ENCODE measurements at regions of chr20 and their contacts with region 1.

Region 1: DNA sequence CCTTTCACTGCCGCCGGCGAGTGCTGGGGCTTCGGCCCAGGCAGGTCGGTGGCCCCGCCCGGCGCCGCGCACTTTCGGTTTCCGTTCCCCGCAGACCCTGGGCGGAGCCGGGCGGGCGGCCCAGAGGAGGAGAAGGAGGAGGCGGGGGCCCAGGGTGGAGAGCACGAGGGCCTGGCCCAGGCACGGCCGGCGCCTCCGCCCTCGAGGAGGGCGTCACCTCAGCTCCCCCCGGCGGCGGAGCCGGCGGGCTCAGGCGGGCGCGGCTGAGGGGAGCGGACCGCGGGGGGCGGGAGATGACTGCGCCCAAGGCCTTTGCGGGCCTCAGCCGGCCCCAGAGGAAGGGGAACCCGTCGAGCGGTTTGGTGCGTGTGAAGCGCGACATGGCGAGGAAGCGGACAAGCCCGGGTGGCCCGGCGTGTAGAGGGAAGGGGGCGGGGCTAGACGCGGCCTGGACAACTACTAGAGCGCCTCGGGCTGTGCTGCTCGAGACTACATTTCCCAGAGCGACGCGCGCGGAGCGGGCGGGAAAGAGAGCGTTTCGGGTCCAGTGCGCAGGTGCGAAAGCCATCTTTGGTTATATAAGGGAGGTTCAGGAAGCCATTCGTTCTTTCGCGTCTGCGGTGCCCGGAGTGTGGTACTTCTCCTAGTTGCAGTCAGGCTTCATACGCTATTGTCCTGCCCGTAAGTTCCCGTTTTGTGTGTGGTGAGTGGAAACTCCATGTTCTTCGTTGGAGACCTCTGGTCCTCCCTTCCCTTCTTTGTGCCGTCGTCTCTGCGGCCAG is at the start of gene ZNFX1:
- DNase-seq: peak; percentile 100
- ATAC-seq: peak; percentile 82
- H3K4me3 ChIP-seq: peak within 1 kb of the TSS; percentile 78 to 100 (median 96)
- H3K4me3 Mint-ChIP-seq: peak within 1 kb of the TSS; percentile 99
- H3K27ac ChIP-seq: peak within 1 kb of the TSS; percentile 89 to 98
- H3K27ac Mint-ChIP-seq: peak within 1 kb of the TSS; percentile 98
- H3K4me1 ChIP-seq: peaks cover 50 to 64% of the 10 kb centered on the region in 2 donors
- H3K4me1 Mint-ChIP-seq: peaks cover 62% of the 10 kb centered on the region
- H3K27me3 ChIP-seq: no peaks in the 10 kb centered on the region
- H3K27me3 Mint-ChIP-seq: no peaks in the 10 kb centered on the region
- CTCF ChIP-seq: no peak
- total RNA-seq, gene ZNFX1: 37.9 and 38.8 TPM in 2 replicates

Region 2: DNA sequence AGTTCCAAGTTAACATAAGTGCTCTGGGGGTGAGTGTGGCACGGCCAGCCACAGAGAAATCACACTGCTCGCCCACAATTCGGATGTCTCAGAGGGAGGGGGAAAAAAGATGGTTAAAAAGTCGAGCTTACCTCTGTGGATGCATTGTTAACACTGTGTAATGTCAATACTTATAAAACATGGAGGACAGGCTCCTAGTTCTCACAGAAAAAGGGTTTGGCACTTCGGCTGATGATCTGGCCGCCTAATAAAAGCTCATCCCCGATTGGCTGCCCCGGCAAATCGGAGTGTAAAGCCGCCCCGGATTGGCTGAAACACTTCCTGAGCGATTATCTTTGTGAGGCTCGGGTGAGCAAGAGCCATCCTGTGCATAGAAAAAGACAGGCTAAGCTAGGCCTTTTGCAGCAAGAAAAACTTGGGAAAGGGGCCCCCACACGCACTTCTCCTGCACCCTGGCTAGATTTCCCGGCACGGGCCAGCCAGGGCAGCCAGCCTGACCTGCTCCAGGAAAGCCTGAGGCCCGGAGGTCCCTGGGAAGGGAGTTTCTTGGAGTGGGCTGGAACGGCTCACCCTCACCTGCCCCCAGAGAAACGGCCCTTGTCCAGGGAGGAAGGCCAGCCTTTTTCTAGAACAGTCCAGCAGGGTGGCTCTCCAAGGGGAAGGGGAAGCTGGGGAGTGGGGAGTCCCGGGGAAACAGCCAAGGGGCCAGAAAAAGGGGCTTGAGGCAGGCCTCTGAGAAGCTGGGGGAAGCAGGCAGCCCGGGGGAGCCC is 1921.5 kb before region 1 on chr20 and contains the start of gene ZMYND8:
- CTCF ChIA-PET with region 1: no interaction called
- POLR2A ChIA-PET with region 1: no interaction called
- intact Hi-C with region 1: loop called (anchors 5 kb)
- DNase-seq: peak; percentile 98
- ATAC-seq: peak; percentile 81
- H3K4me3 ChIP-seq: peak within 1 kb of the TSS; percentile 42 to 68 (median 56)
- H3K4me3 Mint-ChIP-seq: peak within 1 kb of the TSS; percentile 92
- H3K27ac ChIP-seq: peak within 1 kb of the TSS; percentile 90
- H3K27ac Mint-ChIP-seq: peak within 1 kb of the TSS; percentile 99
- H3K4me1 ChIP-seq: peaks cover 89 to 97% of the 10 kb centered on the region in 2 donors
- H3K4me1 Mint-ChIP-seq: peaks cover 57% of the 10 kb centered on the region
- H3K27me3 ChIP-seq: no peaks in the 10 kb centered on the region
- H3K27me3 Mint-ChIP-seq: no peaks in the 10 kb centered on the region
- CTCF ChIP-seq: no peak
- total RNA-seq, gene ZMYND8: 67.2 and 71.6 TPM in 2 replicates

Region 3: GRCh38 chr20:48921151-48921898 is 356.9 kb before region 1 on chr20 and contains the start of gene ARFGEF2:
- CTCF ChIA-PET with region 1: no interaction called
- POLR2A ChIA-PET with region 1: no interaction called
- intact Hi-C with region 1: loop called (anchors 5 kb)
- DNase-seq: peak; percentile 96
- ATAC-seq: peak; percentile 92
- H3K4me3 ChIP-seq: peak within 1 kb of the TSS; percentile 59 to 91 (median 86)
- H3K4me3 Mint-ChIP-seq: peak within 1 kb of the TSS; percentile 96
- H3K27ac ChIP-seq: peak within 1 kb of the TSS; percentile 88 to 91
- H3K27ac Mint-ChIP-seq: peak within 1 kb of the TSS; percentile 95
- H3K4me1 ChIP-seq: peaks cover 47 to 55% of the 10 kb centered on the region in 2 donors
- H3K4me1 Mint-ChIP-seq: peaks cover 49% of the 10 kb centered on the region
- H3K27me3 ChIP-seq: no peaks in the 10 kb centered on the region
- H3K27me3 Mint-ChIP-seq: no peaks in the 10 kb centered on the region
- CTCF ChIP-seq: no peak
- total RNA-seq, gene ARFGEF2: 34.3 and 41.3 TPM in 2 replicates

Region 4: DNA sequence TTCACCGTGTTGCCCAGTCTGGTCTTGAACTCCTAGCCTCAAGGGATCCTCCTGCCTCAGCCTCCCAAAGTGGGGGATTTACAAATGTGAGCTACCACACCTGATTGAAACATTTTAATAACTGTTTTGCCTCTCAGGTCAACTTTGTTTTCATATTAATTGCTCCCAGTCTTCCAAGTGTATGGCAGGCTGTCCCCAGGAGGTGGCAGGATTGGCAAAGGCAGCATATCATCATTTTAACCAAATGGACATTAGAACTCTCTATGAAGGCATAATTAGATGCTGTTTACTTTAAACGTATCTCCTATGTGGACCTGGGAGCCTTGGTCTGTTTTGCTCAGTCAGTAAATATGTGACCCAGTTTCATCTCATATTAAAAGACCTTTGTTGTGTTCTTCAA is 291.3 kb before region 1 on chr20:
- CTCF ChIA-PET with region 1: no interaction called
- POLR2A ChIA-PET with region 1: no interaction called
- intact Hi-C with region 1: no loop called
- DNase-seq: no peak
- ATAC-seq: no peak
- H3K4me3 ChIP-seq: no peak overlapping the region
- H3K4me3 Mint-ChIP-seq: no peak overlapping the region
- H3K27ac ChIP-seq: no peak overlapping the region
- H3K27ac Mint-ChIP-seq: no peak overlapping the region
- H3K4me1 ChIP-seq: no peaks in the 10 kb centered on the region
- H3K4me1 Mint-ChIP-seq: no peaks in the 10 kb centered on the region
- H3K27me3 ChIP-seq: no peaks in the 10 kb centered on the region
- H3K27me3 Mint-ChIP-seq: no peaks in the 10 kb centered on the region
- CTCF ChIP-seq: no peak

Region 5: DNA sequence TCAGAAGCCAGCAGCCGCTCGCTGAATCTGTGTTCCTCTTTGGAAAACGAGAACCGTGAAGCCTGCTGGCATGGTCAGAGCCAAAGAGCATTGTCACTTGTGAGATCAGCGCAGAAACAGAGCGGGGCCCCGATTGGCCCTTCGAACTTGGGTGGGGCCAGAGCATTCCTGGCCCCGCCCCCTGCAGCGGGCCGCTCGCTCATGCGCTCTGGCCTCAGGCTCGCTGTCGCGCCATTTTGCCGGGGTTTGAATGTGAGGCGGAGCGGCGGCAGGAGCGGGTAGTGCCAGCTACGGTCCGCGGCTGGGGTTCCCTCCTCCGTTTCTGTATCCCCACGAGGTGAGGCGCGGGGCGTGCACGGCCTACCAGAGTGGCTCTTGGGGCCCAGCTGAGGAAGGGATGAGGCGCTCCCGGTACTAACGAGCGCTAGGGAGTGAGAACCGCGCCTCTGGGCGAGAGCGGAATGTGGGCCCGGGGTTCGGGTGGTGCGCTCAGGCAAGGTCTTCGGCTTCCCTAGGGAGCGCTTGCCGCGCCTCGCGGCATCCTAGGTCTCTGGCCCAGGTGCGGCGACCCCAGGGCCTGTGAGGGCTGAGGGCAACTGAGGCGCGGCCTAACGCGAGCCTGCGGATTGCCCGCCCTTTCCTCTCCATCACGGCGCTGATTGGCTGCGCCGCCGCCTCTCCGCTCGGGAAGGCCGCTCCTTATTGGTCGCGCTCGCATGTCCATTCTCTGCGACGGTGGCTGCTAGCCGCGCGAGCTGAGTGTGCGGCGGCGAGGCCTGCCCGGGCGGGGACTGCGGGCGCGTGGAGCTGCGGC is 231.9 kb before region 1 on chr20 and contains the start of gene CSE1L:
- CTCF ChIA-PET with region 1: no interaction called
- POLR2A ChIA-PET with region 1: interaction called, 4 read pairs
- intact Hi-C with region 1: loop called (anchors 1 kb)
- DNase-seq: peak; percentile 97
- ATAC-seq: peak; percentile 85
- H3K4me3 ChIP-seq: peak within 1 kb of the TSS; percentile 83 to 100 (median 99)
- H3K4me3 Mint-ChIP-seq: peak within 1 kb of the TSS; percentile 96
- H3K27ac ChIP-seq: peak within 1 kb of the TSS; percentile 78 to 97
- H3K27ac Mint-ChIP-seq: peak within 1 kb of the TSS; percentile 98
- H3K4me1 ChIP-seq: peaks cover 14 to 24% of the 10 kb centered on the region in 2 donors
- H3K4me1 Mint-ChIP-seq: peaks cover 28% of the 10 kb centered on the region
- H3K27me3 ChIP-seq: no peaks in the 10 kb centered on the region
- H3K27me3 Mint-ChIP-seq: no peaks in the 10 kb centered on the region
- CTCF ChIP-seq: no peak
- total RNA-seq, gene CSE1L: 38.0 and 38.5 TPM in 2 replicates

Region 6: GRCh38 chr20:49186535-49187329 is 91.5 kb before region 1 on chr20:
- CTCF ChIA-PET with region 1: no interaction called
- POLR2A ChIA-PET with region 1: interaction called, 12 read pairs
- intact Hi-C with region 1: loop called (anchors 1 kb)
- DNase-seq: peak; percentile 68
- ATAC-seq: no peak
- H3K4me3 ChIP-seq: peak overlapping the region; percentile 54 to 74 (median 67)
- H3K4me3 Mint-ChIP-seq: peak overlapping the region; percentile 88
- H3K27ac ChIP-seq: peak overlapping the region; percentile 79 to 84
- H3K27ac Mint-ChIP-seq: peak overlapping the region; percentile 74
- H3K4me1 ChIP-seq: peaks cover 14 to 20% of the 10 kb centered on the region in 2 donors
- H3K4me1 Mint-ChIP-seq: peaks cover 46% of the 10 kb centered on the region
- H3K27me3 ChIP-seq: no peaks in the 10 kb centered on the region
- H3K27me3 Mint-ChIP-seq: no peaks in the 10 kb centered on the region
- CTCF ChIP-seq: no peak

Region 7: GRCh38 chr20:49237531-49237930 is 40.7 kb before region 1 on chr20:
- CTCF ChIA-PET with region 1: interaction called, 3 read pairs
- POLR2A ChIA-PET with region 1: interaction called, 13 read pairs
- intact Hi-C with region 1: no loop called
- DNase-seq: no peak
- ATAC-seq: no peak
- H3K4me3 ChIP-seq: no peak overlapping the region
- H3K4me3 Mint-ChIP-seq: no peak overlapping the region
- H3K27ac ChIP-seq: no peak overlapping the region
- H3K27ac Mint-ChIP-seq: peak overlapping the region; percentile 43
- H3K4me1 ChIP-seq: no peaks in the 10 kb centered on the region
- H3K4me1 Mint-ChIP-seq: no peaks in the 10 kb centered on the region
- H3K27me3 ChIP-seq: no peaks in the 10 kb centered on the region
- H3K27me3 Mint-ChIP-seq: no peaks in the 10 kb centered on the region
- CTCF ChIP-seq: no peak

Region 8: GRCh38 chr20:49267327-49267726 is 10.9 kb before region 1 on chr20:
- CTCF ChIA-PET with region 1: interaction called, 3 read pairs
- POLR2A ChIA-PET with region 1: interaction called, 10 read pairs
- intact Hi-C with region 1: no loop called
- DNase-seq: peak; percentile 47
- ATAC-seq: peak; percentile 47
- H3K4me3 ChIP-seq: peak overlapping the region in 1 of 5 experiments; percentile 53
- H3K4me3 Mint-ChIP-seq: peak overlapping the region; percentile 70
- H3K27ac ChIP-seq: peak overlapping the region; percentile 62 to 74
- H3K27ac Mint-ChIP-seq: peak overlapping the region; percentile 78
- H3K4me1 ChIP-seq: peaks cover 23 to 45% of the 10 kb centered on the region in 2 donors
- H3K4me1 Mint-ChIP-seq: peaks cover 50% of the 10 kb centered on the region
- H3K27me3 ChIP-seq: no peaks in the 10 kb centered on the region
- H3K27me3 Mint-ChIP-seq: no peaks in the 10 kb centered on the region
- CTCF ChIP-seq: no peak

Region 9: DNA sequence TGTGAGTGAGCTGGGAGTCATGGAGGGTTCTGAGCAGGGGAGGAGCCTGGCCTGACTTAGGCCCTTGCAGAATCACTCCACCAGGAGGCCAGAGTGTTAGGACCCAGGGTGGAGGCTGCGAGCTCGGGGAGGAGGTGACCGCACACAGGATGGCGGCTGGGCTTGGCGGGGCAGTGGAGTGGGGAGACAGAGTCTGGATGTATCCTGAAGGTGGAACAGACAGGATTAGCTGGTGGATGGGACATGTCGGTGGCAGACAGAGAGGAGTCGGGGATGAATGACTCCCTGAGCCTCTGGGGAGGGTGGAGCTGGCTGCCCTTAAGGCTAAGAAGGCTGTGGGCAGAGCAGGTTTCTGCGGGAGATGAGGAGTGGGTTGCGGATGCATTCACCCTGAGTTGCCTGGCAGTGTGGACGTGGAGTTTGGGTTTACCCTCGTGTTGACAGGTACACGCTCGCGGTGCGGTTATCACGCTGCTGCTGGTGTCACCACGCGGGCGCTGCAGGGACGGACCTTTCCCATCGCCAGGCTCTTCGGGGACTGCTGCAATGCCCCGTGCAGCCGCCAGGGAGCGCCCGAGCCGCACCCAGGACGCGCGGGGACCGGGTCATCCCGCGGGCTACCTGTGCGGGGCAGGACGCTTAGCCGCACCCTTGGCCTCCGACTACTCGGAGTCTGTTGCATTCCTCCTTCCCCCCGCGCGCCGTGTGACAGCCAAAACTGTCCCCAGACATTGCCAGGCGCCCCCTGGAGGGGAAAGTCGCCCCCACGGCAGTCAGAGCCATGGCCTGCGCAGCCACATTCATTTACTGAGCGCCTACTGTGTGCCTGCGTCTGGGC is 332.7 kb after region 1 on chr20:
- CTCF ChIA-PET with region 1: no interaction called
- POLR2A ChIA-PET with region 1: no interaction called
- intact Hi-C with region 1: no loop called
- DNase-seq: peak; percentile 84
- ATAC-seq: peak; percentile 88
- H3K4me3 ChIP-seq: peak overlapping the region in 2 of 5 experiments; percentile 15
- H3K4me3 Mint-ChIP-seq: peak overlapping the region; percentile 67
- H3K27ac ChIP-seq: peak overlapping the region in 1 of 2 donors; percentile 6
- H3K27ac Mint-ChIP-seq: no peak overlapping the region
- H3K4me1 ChIP-seq: peaks cover 14 to 20% of the 10 kb centered on the region in 2 donors
- H3K4me1 Mint-ChIP-seq: peaks cover 18% of the 10 kb centered on the region
- H3K27me3 ChIP-seq: peaks cover 0 to 29% (median 8%) of the 10 kb centered on the region in 4 experiments
- H3K27me3 Mint-ChIP-seq: peaks cover 14% of the 10 kb centered on the region
- CTCF ChIP-seq: peak; percentile 100

Measured in B cell (primary cell).